Calu3 (cell line): ENCODE measurements at regions of chr12 and their contacts with region 1.

Region 1: GRCh38 chr12:67592216-67593011 is 56.1 kb upstream of the DYRK2 start:
- DNase-seq: peak; percentile 45
- H3K4me3 Mint-ChIP-seq: peak overlapping the region; percentile 13
- H3K27ac Mint-ChIP-seq: peak overlapping the region; percentile 82
- H3K4me1 Mint-ChIP-seq: peaks cover 47% of the 10 kb centered on the region
- H3K27me3 Mint-ChIP-seq: no peaks in the 10 kb centered on the region
- CTCF ChIP-seq: no peak

Region 2: GRCh38 chr12:67482751-67483671 is 109.4 kb before region 1 on chr12:
- CTCF ChIA-PET with region 1: interaction called, 3 read pairs
- intact Hi-C with region 1: loop called (anchors 5 kb)
- DNase-seq: peak; percentile 63
- H3K4me3 Mint-ChIP-seq: no peak overlapping the region
- H3K27ac Mint-ChIP-seq: no peak overlapping the region
- H3K4me1 Mint-ChIP-seq: peaks cover 41% of the 10 kb centered on the region
- H3K27me3 Mint-ChIP-seq: no peaks in the 10 kb centered on the region
- CTCF ChIP-seq: no peak

Region 3: GRCh38 chr12:67515679-67516340 is 76.6 kb before region 1 on chr12:
- CTCF ChIA-PET with region 1: no interaction called
- intact Hi-C with region 1: loop called (anchors 2 kb)
- DNase-seq: peak; percentile 64
- H3K4me3 Mint-ChIP-seq: no peak overlapping the region
- H3K27ac Mint-ChIP-seq: peak overlapping the region; percentile 64
- H3K4me1 Mint-ChIP-seq: peaks cover 53% of the 10 kb centered on the region
- H3K27me3 Mint-ChIP-seq: no peaks in the 10 kb centered on the region
- CTCF ChIP-seq: no peak